ENCODE measurements at regions of chr3 and their contacts with region 1.

Region 1: GRCh38 chr3:167380004-167380689 is at the start of gene ZBBX:
- DNase-seq: peak; percentile 76 to 87
- H3K4me3 ChIP-seq: no peak within 1 kb of the TSS
- H3K4me3 Mint-ChIP-seq: peak within 1 kb of the TSS; percentile 70
- H3K27ac Mint-ChIP-seq: peak within 1 kb of the TSS; percentile 74
- H3K4me1 ChIP-seq: no peaks in the 10 kb centered on the region
- H3K4me1 Mint-ChIP-seq: peaks cover 5% of the 10 kb centered on the region
- H3K27me3 ChIP-seq: no peaks in the 10 kb centered on the region
- H3K27me3 Mint-ChIP-seq: peaks cover 4% of the 10 kb centered on the region
- CTCF ChIP-seq: peak; percentile 84 to 85
- total RNA-seq, gene ZBBX: not detected in 2 replicates

Region 2: DNA sequence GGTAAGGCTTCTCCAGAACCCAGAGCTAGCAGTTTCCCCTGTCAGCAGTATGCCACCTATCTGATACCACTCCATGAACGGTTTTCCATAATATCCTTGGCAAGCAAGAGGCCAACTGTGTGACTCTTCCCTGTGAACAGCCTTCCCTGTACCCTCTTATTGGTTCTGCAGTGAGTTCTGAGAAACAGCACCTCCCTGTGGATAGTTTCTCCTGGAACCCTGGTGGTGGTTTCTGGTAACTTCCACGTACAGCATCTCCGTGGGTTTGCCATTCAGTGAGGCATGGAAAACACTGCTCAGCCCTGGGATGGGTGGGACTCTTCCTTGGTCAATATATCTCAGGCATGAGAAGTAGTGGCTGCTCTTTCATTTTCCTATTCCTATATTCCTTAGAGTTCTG is 113.1 kb after region 1 on chr3:
- CTCF ChIA-PET with region 1: no interaction called
- POLR2A ChIA-PET with region 1: no interaction called
- intact Hi-C with region 1: loop called (anchors 1 kb)
- DNase-seq: peak in 1 of 2 experiments; percentile 28
- H3K4me3 ChIP-seq: no peak overlapping the region
- H3K4me3 Mint-ChIP-seq: no peak overlapping the region
- H3K27ac Mint-ChIP-seq: no peak overlapping the region
- H3K4me1 ChIP-seq: no peaks in the 10 kb centered on the region
- H3K4me1 Mint-ChIP-seq: no peaks in the 10 kb centered on the region
- H3K27me3 ChIP-seq: no peaks in the 10 kb centered on the region
- H3K27me3 Mint-ChIP-seq: peaks cover 3% of the 10 kb centered on the region
- CTCF ChIP-seq: peak; percentile 51 to 82

Region 3: GRCh38 chr3:167740961-167741587 is 360.9 kb after region 1 on chr3:
- CTCF ChIA-PET with region 1: interaction called, 13 read pairs
- POLR2A ChIA-PET with region 1: no interaction called
- intact Hi-C with region 1: no loop called
- DNase-seq: peak; percentile 43 to 55
- H3K4me3 ChIP-seq: no peak overlapping the region
- H3K4me3 Mint-ChIP-seq: no peak overlapping the region
- H3K27ac Mint-ChIP-seq: no peak overlapping the region
- H3K4me1 ChIP-seq: no peaks in the 10 kb centered on the region
- H3K4me1 Mint-ChIP-seq: peaks cover 6% of the 10 kb centered on the region
- H3K27me3 ChIP-seq: no peaks in the 10 kb centered on the region
- H3K27me3 Mint-ChIP-seq: no peaks in the 10 kb centered on the region
- CTCF ChIP-seq: peak; percentile 36 to 85

Measured in Caco-2 (cell line).